Activated CD4-positive, alpha-beta memory T cell treated with anti-CD3 and anti-CD28 coated beads, Interleukin-2, amount 10 ng/mL, durations not matched to agents 7 days and 5 days (primary cell): ENCODE measurements at regions of chr11 and their contacts with region 1.

Region 1: GRCh38 chr11:43852057-43852636 is 28.5 kb upstream of the ALKBH3 start:
- DNase-seq: peak; percentile 63
- H3K4me3 Mint-ChIP-seq: no peak overlapping the region
- H3K27ac Mint-ChIP-seq: no peak overlapping the region
- H3K4me1 Mint-ChIP-seq: no peaks in the 10 kb centered on the region
- H3K27me3 Mint-ChIP-seq: no peaks in the 10 kb centered on the region

Region 2: GRCh38 chr11:43567396-43567975 is 284.7 kb before region 1 on chr11:
- CTCF ChIA-PET with region 1: interaction called, 13 read pairs
- POLR2A ChIA-PET with region 1: no interaction called
- DNase-seq: no peak
- H3K4me3 Mint-ChIP-seq: no peak overlapping the region
- H3K27ac Mint-ChIP-seq: no peak overlapping the region
- H3K4me1 Mint-ChIP-seq: no peaks in the 10 kb centered on the region
- H3K27me3 Mint-ChIP-seq: peaks cover 40% of the 10 kb centered on the region

Region 3: GRCh38 chr11:43825217-43825816 is 26.8 kb before region 1 on chr11:
- CTCF ChIA-PET with region 1: interaction called, 28 read pairs
- POLR2A ChIA-PET with region 1: interaction called, 5 read pairs
- DNase-seq: no peak
- H3K4me3 Mint-ChIP-seq: no peak overlapping the region
- H3K27ac Mint-ChIP-seq: no peak overlapping the region
- H3K4me1 Mint-ChIP-seq: no peaks in the 10 kb centered on the region
- H3K27me3 Mint-ChIP-seq: no peaks in the 10 kb centered on the region